WTC11 (cell line): ENCODE measurements at regions of chr13 and their contacts with region 1.

Region 1: DNA sequence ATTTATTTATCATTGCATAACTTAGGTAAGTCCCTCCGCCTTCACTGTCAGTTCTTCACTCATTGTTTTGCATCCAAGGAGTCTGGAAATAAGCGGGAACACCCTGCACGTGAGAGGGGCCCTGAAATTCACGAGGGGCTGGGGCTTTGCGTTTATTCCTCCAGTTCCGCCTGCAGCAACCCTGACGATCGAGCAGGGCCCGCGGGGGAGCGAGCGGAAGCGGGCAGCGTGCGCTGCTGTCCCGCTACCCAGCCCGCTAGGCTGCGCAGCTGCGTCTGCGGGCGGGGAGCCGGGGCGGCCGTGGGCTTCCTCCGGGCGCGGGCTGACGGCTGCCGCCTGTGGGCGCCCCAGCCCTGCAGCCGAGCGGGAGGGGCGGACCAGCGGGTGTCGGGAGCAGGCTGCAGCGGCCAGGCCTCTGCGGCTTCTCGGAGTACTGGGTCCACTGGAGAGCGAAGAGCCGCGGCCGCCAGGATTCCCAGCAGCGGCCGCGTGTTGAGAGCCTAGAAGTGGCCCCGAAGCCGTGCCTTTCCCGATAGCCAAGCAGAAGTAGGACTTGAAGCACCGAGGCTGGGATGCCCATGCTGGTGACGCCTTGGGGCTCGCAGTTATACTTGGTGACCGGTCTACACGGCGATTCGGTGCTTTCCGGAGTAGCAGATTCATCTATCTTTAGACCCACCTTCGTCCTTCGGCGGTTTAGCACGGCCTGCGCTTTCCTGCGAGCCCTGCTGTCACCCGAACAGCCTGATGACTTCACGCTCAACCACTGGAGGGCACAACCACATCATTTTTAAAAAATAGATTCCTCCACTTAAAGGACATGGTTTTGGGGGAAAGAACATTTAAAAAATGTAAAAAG is 32.9 kb upstream of the SACS start:
- DNase-seq: peak; percentile 67
- ATAC-seq: peak; percentile 81
- H3K4me3 Mint-ChIP-seq: peak overlapping the region; percentile 61
- H3K27ac Mint-ChIP-seq: no peak overlapping the region
- H3K4me1 Mint-ChIP-seq: peaks cover 26% of the 10 kb centered on the region
- H3K27me3 Mint-ChIP-seq: peaks cover 25% of the 10 kb centered on the region
- CTCF ChIP-seq: peak; percentile 46; the same call in 1 of the 2 replicates

Region 2: DNA sequence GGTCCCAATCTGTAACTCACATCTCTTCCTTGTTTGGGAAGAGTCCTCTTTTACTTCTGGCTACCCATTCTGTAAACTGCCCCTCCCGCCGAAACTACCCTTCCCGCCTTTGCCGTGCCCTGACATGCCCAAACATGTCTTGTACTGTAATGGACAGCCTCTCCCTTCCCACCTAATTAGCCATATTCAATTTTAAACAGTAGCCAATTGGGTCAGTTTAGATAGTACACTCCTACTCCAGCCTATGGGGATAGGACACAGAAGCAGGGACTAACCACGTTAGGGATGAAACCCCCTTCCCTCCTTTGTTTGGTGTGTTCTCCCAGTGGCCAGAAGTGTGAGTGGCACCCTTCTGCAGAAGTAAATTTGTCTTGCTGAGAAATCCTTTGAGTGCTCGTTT is 67.0 kb before region 1 on chr13:
- CTCF ChIA-PET with region 1: no interaction called
- POLR2A ChIA-PET with region 1: no interaction called
- DNase-seq: no peak
- ATAC-seq: peak; percentile 75
- H3K4me3 Mint-ChIP-seq: no peak overlapping the region
- H3K27ac Mint-ChIP-seq: peak overlapping the region; percentile 60
- H3K4me1 Mint-ChIP-seq: peaks cover 12% of the 10 kb centered on the region
- H3K27me3 Mint-ChIP-seq: no peaks in the 10 kb centered on the region
- CTCF ChIP-seq: no peak

Region 3: DNA sequence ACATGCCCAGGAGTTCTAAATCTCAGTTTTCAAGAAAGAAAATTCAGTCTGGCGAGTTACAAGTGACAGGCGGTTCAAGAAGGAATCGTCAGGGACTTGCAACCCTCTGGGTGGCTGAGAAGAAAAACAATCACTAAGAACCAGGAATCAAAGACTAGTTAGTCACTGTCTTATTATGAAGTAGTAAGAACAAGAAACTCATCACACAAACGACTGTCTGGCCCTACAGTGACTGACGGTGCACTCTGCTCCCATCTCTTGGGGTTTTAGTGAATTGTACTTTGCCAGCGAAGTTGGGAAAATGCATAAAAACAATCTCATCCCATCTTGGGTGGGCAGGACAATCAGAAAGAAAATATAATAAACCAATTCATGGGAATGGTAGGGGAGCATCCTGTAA is 30.8 kb after region 1 on chr13:
- CTCF ChIA-PET with region 1: no interaction called
- POLR2A ChIA-PET with region 1: no interaction called
- DNase-seq: no peak
- ATAC-seq: no peak
- H3K4me3 Mint-ChIP-seq: no peak overlapping the region
- H3K27ac Mint-ChIP-seq: no peak overlapping the region
- H3K4me1 Mint-ChIP-seq: peaks cover 25% of the 10 kb centered on the region
- H3K27me3 Mint-ChIP-seq: peaks cover 3% of the 10 kb centered on the region; the same call in 1 of the 2 replicates
- CTCF ChIP-seq: no peak

Region 4: GRCh38 chr13:23567906-23568460 is 101.6 kb after region 1 on chr13:
- CTCF ChIA-PET with region 1: interaction called, 12 read pairs
- POLR2A ChIA-PET with region 1: no interaction called
- DNase-seq: no peak
- ATAC-seq: 0 out of 2 replicates have a peak, but pooled peaks have one; percentile 22
- H3K4me3 Mint-ChIP-seq: no peak overlapping the region
- H3K27ac Mint-ChIP-seq: no peak overlapping the region
- H3K4me1 Mint-ChIP-seq: peaks cover 13% of the 10 kb centered on the region
- H3K27me3 Mint-ChIP-seq: no peaks in the 10 kb centered on the region
- CTCF ChIP-seq: no peak

Region 5: DNA sequence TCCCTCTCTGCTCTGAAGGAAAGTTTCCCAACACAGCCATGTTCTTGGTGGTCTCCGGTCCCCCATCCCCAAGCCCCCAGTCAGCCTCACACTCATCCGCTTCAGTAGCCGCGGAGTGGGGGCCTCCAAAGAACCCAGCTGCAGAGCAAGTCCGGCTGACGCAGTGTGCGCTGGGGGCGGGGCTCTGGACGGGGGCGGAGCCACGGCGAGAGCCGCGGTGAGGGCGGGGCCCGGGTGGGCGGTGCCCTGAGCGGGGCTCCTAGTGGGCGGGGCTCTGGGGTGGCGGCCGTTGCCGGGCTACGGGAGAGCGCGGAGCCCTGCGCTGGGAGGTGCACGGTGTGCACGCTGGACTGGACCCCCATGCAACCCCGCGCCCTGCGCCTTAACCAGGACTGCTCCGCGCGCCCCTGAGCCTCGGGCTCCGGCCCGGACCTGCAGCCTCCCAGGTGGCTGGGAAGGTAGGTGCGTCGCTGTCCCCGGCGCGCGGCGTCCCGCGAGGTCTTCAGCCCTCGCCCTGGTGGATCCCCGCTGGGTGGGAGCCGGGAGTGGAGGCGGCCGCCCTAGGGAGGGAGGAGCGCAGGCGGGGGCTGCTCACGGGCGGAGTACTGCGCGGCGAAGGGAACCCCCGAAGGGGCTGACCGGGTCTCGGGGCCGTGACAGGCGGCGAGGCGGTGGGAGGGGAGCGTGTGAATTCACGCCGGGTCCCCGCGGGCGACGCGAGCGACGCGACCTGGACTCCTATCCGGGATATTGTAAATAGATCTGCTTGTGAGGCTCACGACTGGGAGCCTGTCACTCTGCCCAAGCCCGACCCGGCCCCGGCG is 112.9 kb after region 1 on chr13:
- CTCF ChIA-PET with region 1: interaction called, 12 read pairs
- POLR2A ChIA-PET with region 1: no interaction called
- DNase-seq: peak; percentile 95
- ATAC-seq: peak; percentile 94
- H3K4me3 Mint-ChIP-seq: peak overlapping the region; percentile 74
- H3K27ac Mint-ChIP-seq: no peak overlapping the region
- H3K4me1 Mint-ChIP-seq: peaks cover 19% of the 10 kb centered on the region
- H3K27me3 Mint-ChIP-seq: peaks cover 48% of the 10 kb centered on the region
- CTCF ChIP-seq: no peak

Region 6: GRCh38 chr13:23888658-23889614 is 422.6 kb after region 1 on chr13 and contains the start of gene MIPEP:
- CTCF ChIA-PET with region 1: interaction called, 21 read pairs
- POLR2A ChIA-PET with region 1: no interaction called
- DNase-seq: peak; percentile 92
- ATAC-seq: peak; percentile 89
- H3K4me3 Mint-ChIP-seq: peak within 1 kb of the TSS; percentile 77
- H3K27ac Mint-ChIP-seq: peak within 1 kb of the TSS; percentile 57; the same call in 1 of the 2 replicates
- H3K4me1 Mint-ChIP-seq: peaks cover 19% of the 10 kb centered on the region
- H3K27me3 Mint-ChIP-seq: no peaks in the 10 kb centered on the region; the same call in 1 of the 2 replicates
- CTCF ChIP-seq: peak; percentile 21; the same call in 1 of the 2 replicates
- total RNA-seq, gene MIPEP: 24.8 to 30.5 TPM (median 28.1 TPM) in 3 replicates